ENCODE measurements at regions of chr12 and their contacts with region 1.

Region 1: GRCh38 chr12:54279866-54280467 is at the start of gene CBX5:
- DNase-seq: peak; percentile 99
- ATAC-seq: peak; percentile 85
- total RNA-seq, gene CBX5: 41.0 TPM

Region 2: GRCh38 chr12:54220092-54220557 is 59.8 kb before region 1 on chr12:
- intact Hi-C with region 1: loop called (anchors 5 kb)
- DNase-seq: peak; percentile 65
- ATAC-seq: peak; percentile 69

Region 3: DNA sequence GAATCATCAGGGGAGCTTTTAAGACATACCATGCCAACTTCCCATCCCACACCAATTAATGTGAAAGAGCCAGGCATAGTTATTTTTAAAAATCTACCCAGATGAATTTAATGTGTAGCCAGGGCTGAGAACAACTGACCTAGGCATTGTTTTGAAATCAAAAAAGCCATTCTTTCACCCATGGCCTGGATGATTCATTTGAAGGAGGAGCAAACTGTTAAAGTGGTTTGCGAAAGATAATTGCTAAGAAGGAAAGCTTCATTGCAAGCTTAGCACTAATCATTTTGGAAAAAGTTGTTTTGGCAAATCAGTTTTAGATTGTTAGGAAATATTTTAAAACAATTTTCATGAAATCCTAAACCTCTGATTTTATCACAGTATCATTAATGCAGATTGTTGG is 195.6 kb after region 1 on chr12:
- intact Hi-C with region 1: no loop called
- DNase-seq: no peak
- ATAC-seq: no peak

Region 4: DNA sequence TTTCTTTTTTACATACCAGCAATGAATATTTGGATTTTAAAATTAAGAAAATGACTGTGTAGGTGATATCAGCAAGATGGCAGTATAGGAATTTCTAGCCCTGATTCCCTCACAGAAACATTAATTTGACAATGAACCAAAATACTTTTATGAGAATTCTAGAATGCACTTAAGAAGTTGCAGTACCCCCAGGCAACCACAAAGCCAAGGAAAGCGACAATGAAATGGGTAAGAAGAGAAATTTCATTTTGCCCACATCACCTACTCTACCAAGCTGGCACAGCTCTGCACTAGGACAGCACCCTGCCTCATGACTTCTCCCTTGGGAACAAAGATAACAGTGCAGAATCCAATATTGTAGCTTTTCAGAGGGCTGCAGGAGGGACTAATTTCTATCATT is 852.8 kb after region 1 on chr12:
- intact Hi-C with region 1: no loop called
- DNase-seq: no peak
- ATAC-seq: no peak

Measured in Right ventricle myocardium superior (tissue), 1 donor.